ENCODE measurements at regions of chr12 and their contacts with region 1.

Region 1: GRCh38 chr12:119544765-119545625 is 48.6 kb upstream of the TMEM233 start:
- DNase-seq: peak; percentile 70
- H3K4me3 Mint-ChIP-seq: no peak overlapping the region
- H3K27ac Mint-ChIP-seq: no peak overlapping the region
- H3K4me1 Mint-ChIP-seq: no peaks in the 10 kb centered on the region
- H3K27me3 Mint-ChIP-seq: peaks cover 48% of the 10 kb centered on the region
- CTCF ChIP-seq: peak; percentile 91

Region 2: GRCh38 chr12:117874842-117875434 is 1670.1 kb before region 1 on chr12:
- CTCF ChIA-PET with region 1: interaction called, 4 read pairs
- POLR2A ChIA-PET with region 1: no interaction called
- intact Hi-C with region 1: loop called (anchors 5 kb)
- DNase-seq: peak; percentile 66
- H3K4me3 Mint-ChIP-seq: no peak overlapping the region
- H3K27ac Mint-ChIP-seq: no peak overlapping the region
- H3K4me1 Mint-ChIP-seq: no peaks in the 10 kb centered on the region
- H3K27me3 Mint-ChIP-seq: peaks cover 7% of the 10 kb centered on the region
- CTCF ChIP-seq: peak; percentile 88

Region 3: DNA sequence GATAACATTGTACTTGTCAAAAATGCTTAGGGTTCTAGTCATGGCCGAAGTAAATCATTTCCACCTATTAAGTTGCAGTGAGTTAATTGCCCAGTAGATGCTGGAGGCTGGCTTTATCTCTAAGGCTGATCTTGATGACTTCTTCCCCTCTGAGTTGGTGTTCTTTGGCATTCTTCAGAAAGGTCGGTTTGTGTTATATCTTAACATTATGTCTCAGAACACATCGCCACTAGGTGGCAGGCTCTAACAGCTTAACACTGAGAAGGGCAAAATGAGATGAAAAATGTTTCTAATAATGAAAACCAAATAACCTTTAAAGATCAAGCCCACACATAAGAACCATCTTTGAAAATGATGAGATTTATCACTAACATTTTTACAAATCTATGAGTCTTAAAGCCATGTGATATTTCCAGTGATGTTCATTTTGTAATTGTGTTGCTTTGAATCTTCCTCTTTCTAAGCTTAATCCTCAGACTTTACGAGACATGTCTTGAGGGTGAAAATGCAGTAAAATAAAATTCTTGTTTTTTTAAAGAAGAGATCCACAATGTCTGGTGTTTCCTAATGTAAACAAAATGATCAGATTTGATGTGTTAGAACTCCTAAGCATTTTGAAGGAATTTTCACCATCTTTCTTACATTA is 1140.0 kb before region 1 on chr12:
- CTCF ChIA-PET with region 1: interaction called, 72 read pairs
- POLR2A ChIA-PET with region 1: no interaction called
- intact Hi-C with region 1: loop called (anchors 1 kb)
- DNase-seq: peak; percentile 73
- H3K4me3 Mint-ChIP-seq: no peak overlapping the region
- H3K27ac Mint-ChIP-seq: no peak overlapping the region
- H3K4me1 Mint-ChIP-seq: no peaks in the 10 kb centered on the region
- H3K27me3 Mint-ChIP-seq: no peaks in the 10 kb centered on the region
- CTCF ChIP-seq: peak; percentile 79

Region 4: DNA sequence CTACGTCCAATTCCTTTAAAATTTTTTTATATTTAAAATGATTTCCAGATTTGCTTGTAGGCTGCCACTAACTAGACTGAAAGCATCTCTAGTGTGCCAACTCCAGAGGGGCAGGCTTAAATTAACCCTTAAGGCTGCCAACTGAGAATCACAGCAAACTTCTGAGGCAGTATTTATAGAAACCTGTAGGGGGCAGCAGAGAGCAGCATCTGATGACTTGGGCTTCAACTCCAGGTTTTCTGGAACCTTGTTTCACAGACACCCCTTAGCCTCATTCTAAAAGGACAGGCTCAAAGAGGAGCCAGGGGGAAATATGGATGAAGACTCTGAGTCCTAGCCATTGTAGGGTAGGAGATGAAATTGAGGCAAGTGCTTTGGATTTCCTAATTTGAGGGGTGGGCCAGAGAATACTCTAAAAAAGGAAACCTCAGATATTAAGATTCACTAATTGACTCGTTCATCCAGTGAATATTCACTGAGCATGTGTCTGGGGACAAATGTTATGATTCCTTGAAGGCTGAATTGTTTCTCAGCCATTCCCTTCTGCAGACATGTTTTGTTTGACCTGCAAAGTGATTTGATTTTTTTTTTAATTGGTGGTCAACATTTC is 429.6 kb before region 1 on chr12:
- CTCF ChIA-PET with region 1: interaction called, 4 read pairs
- POLR2A ChIA-PET with region 1: no interaction called
- intact Hi-C with region 1: loop called (anchors 2 kb)
- DNase-seq: peak; percentile 39
- H3K4me3 Mint-ChIP-seq: no peak overlapping the region
- H3K27ac Mint-ChIP-seq: no peak overlapping the region
- H3K4me1 Mint-ChIP-seq: no peaks in the 10 kb centered on the region
- H3K27me3 Mint-ChIP-seq: no peaks in the 10 kb centered on the region
- CTCF ChIP-seq: peak; percentile 70

Region 5: GRCh38 chr12:119556854-119557253 is 11.9 kb after region 1 on chr12:
- CTCF ChIA-PET with region 1: interaction called, 10 read pairs
- POLR2A ChIA-PET with region 1: no interaction called
- intact Hi-C with region 1: no loop called
- DNase-seq: peak; percentile 5
- H3K4me3 Mint-ChIP-seq: no peak overlapping the region
- H3K27ac Mint-ChIP-seq: no peak overlapping the region
- H3K4me1 Mint-ChIP-seq: no peaks in the 10 kb centered on the region
- H3K27me3 Mint-ChIP-seq: peaks cover 17% of the 10 kb centered on the region
- CTCF ChIP-seq: no peak

Measured in MCF 10A (cell line).